Upper lobe of right lung (tissue), 1 donor: ENCODE measurements at regions of chr4 and their contacts with region 1.

Region 1: GRCh38 chr4:147088146-147088545 is 142.5 kb upstream of the TTC29 start:
- DNase-seq: no peak
- ATAC-seq: no peak
- H3K4me3 ChIP-seq: no peak overlapping the region
- H3K27ac ChIP-seq: no peak overlapping the region
- H3K4me1 ChIP-seq: no peaks in the 10 kb centered on the region
- H3K27me3 ChIP-seq: no peaks in the 10 kb centered on the region
- CTCF ChIP-seq: no peak

Region 2: DNA sequence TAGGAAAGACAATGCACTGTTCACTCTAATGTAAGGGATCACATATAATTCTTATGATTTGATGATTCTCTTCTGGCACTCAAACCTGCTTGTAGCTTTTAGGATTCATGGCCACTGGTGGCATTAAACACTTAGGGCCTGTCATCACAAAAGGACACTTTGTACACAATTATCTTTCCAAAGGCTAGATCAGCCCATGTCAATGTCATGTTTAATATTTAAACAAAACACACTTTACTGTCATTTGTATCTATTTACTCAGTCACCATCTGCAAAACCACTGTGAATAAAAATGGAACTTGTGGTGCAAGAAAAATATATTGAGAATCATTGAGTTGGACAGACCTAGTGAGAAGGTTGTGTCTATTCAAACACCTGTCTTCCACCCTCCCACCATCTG is 58.9 kb before region 1 on chr4:
- intact Hi-C with region 1: loop called (anchors 10 kb)
- DNase-seq: no peak
- ATAC-seq: no peak
- H3K4me3 ChIP-seq: no peak overlapping the region
- H3K27ac ChIP-seq: no peak overlapping the region
- H3K4me1 ChIP-seq: no peaks in the 10 kb centered on the region
- H3K27me3 ChIP-seq: no peaks in the 10 kb centered on the region
- CTCF ChIP-seq: no peak